PC-9 (cell line): ENCODE measurements at regions of chrX and their contacts with region 1.

Region 1: GRCh38 chrX:71432733-71433132 is 66.6 kb downstream of the TAF1 start:
- DNase-seq: no peak
- H3K4me3 ChIP-seq: no peak overlapping the region
- H3K27ac ChIP-seq: no peak overlapping the region
- H3K4me1 ChIP-seq: no peaks in the 10 kb centered on the region
- H3K27me3 ChIP-seq: no peaks in the 10 kb centered on the region
- CTCF ChIP-seq: no peak

Region 2: GRCh38 chrX:70672326-70672725 is 760.4 kb before region 1 on chrX:
- CTCF ChIA-PET with region 1: no interaction called
- POLR2A ChIA-PET with region 1: no interaction called
- intact Hi-C with region 1: no loop called
- DNase-seq: no peak
- H3K4me3 ChIP-seq: no peak overlapping the region
- H3K27ac ChIP-seq: no peak overlapping the region
- H3K4me1 ChIP-seq: no peaks in the 10 kb centered on the region
- H3K27me3 ChIP-seq: no peaks in the 10 kb centered on the region
- CTCF ChIP-seq: no peak

Region 3: DNA sequence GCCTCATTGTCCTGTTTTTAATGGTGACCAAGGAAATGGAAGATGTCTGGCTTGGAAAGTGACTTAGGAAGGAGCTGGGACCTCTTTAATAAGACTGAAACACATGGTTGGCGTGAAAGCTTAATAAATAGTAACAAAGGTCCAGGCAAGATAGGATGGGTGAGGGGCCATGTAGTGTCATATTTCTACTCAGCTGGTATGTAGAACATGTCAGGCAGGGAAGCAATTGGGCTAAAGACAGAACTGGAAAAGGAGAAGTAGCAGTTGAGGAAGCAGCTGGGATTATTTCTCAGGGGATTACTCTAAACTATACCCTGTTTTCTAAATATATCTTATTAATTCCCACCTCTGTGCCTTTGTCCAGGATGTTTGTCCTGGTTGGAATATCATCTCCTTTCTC is 112.6 kb before region 1 on chrX:
- CTCF ChIA-PET with region 1: no interaction called
- POLR2A ChIA-PET with region 1: interaction called, 21 read pairs
- intact Hi-C with region 1: no loop called
- DNase-seq: no peak
- H3K4me3 ChIP-seq: no peak overlapping the region
- H3K27ac ChIP-seq: no peak overlapping the region
- H3K4me1 ChIP-seq: no peaks in the 10 kb centered on the region
- H3K27me3 ChIP-seq: no peaks in the 10 kb centered on the region
- CTCF ChIP-seq: no peak

Region 4: GRCh38 chrX:71466979-71467523 is 34.3 kb after region 1 on chrX:
- CTCF ChIA-PET with region 1: no interaction called
- POLR2A ChIA-PET with region 1: no interaction called
- intact Hi-C with region 1: no loop called
- DNase-seq: no peak
- H3K4me3 ChIP-seq: no peak overlapping the region
- H3K27ac ChIP-seq: no peak overlapping the region
- H3K4me1 ChIP-seq: no peaks in the 10 kb centered on the region
- H3K27me3 ChIP-seq: no peaks in the 10 kb centered on the region
- CTCF ChIP-seq: no peak